Ovary (tissue), 10 donors: ENCODE measurements at regions of chr3 and their contacts with region 1.

Region 1: DNA sequence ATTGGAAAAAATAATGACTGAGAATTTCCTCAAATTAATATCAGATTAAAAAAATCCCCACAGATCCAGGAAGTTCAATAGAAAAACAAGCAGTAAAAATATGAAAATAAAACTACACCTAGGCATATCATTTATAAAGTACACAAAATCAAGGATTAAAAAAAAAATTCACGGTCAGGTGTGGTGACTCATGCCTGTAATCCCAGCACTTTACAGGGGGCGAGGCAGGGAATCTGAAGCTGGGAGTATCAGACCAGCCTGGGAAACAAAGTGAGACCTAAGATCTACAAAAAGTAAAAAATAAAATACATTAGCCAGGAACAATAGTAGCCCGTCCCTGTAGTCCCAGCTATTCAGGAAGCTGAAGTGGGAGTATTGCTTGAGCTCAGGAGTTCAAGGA is 778.3 kb upstream of the ALCAM start:
- DNase-seq: no peak
- H3K4me3 ChIP-seq: no peak overlapping the region
- H3K27ac ChIP-seq: no peak overlapping the region
- H3K4me1 ChIP-seq: no peaks in the 10 kb centered on the region
- H3K27me3 ChIP-seq: no peaks in the 10 kb centered on the region
- CTCF ChIP-seq: no peak
- EP300 ChIP-seq: no peak
- POLR2A ChIP-seq: no peak

Region 2: GRCh38 chr3:104178680-104179079 is 409.8 kb before region 1 on chr3:
- intact Hi-C with region 1: loop called in 1 of 4 experiments (anchors 2 kb)
- DNase-seq: no peak
- H3K4me3 ChIP-seq: no peak overlapping the region
- H3K27ac ChIP-seq: no peak overlapping the region
- H3K4me1 ChIP-seq: no peaks in the 10 kb centered on the region
- H3K27me3 ChIP-seq: no peaks in the 10 kb centered on the region
- CTCF ChIP-seq: no peak
- EP300 ChIP-seq: no peak
- POLR2A ChIP-seq: no peak